ENCODE measurements at regions of chr1 and their contacts with region 1.

Region 1: GRCh38 chr1:101288491-101288944 is 51.7 kb downstream of the S1PR1 start:
- DNase-seq: peak; percentile 81
- H3K4me3 Mint-ChIP-seq: peak overlapping the region; percentile 12
- H3K27ac Mint-ChIP-seq: peak overlapping the region; percentile 63
- H3K4me1 Mint-ChIP-seq: peaks cover 94% of the 10 kb centered on the region
- H3K27me3 Mint-ChIP-seq: no peaks in the 10 kb centered on the region

Region 2: DNA sequence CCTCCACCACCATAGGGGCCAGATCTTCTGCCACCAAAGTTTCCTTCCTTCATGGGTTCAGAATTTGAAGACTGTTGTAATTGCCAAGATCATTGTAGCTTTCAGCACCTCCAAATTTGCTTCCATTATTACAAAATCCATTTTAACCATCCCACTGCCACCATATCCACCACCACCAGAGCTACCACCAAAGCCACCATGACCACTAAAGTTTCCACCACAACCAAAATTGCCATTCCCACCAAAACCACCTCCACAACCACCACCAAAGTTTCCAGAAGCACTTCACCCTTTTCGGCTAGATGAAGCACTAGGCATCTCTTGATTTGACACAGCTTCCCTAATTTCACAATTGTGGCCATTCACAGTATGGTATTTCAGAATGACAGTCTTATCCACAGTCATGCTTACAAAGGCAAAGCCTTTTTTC is 347.4 kb before region 1 on chr1:
- CTCF ChIA-PET with region 1: interaction called, 13 read pairs
- POLR2A ChIA-PET with region 1: no interaction called
- DNase-seq: peak; percentile 7
- H3K4me3 Mint-ChIP-seq: peak overlapping the region; percentile 46
- H3K27ac Mint-ChIP-seq: peak overlapping the region; percentile 88
- H3K4me1 Mint-ChIP-seq: peaks cover 45% of the 10 kb centered on the region
- H3K27me3 Mint-ChIP-seq: no peaks in the 10 kb centered on the region

Region 3: GRCh38 chr1:101167891-101168290 is 120.6 kb before region 1 on chr1:
- CTCF ChIA-PET with region 1: no interaction called
- POLR2A ChIA-PET with region 1: no interaction called
- DNase-seq: no peak
- H3K4me3 Mint-ChIP-seq: no peak overlapping the region
- H3K27ac Mint-ChIP-seq: no peak overlapping the region
- H3K4me1 Mint-ChIP-seq: peaks cover 20% of the 10 kb centered on the region
- H3K27me3 Mint-ChIP-seq: no peaks in the 10 kb centered on the region

Region 4: GRCh38 chr1:101203820-101204540 is 84.5 kb before region 1 on chr1:
- CTCF ChIA-PET with region 1: no interaction called
- POLR2A ChIA-PET with region 1: no interaction called
- DNase-seq: no peak
- H3K4me3 Mint-ChIP-seq: no peak overlapping the region
- H3K27ac Mint-ChIP-seq: no peak overlapping the region
- H3K4me1 Mint-ChIP-seq: peaks cover 25% of the 10 kb centered on the region
- H3K27me3 Mint-ChIP-seq: no peaks in the 10 kb centered on the region

Region 5: GRCh38 chr1:101302831-101303511 is 14.5 kb after region 1 on chr1:
- CTCF ChIA-PET with region 1: interaction called, 11 read pairs
- POLR2A ChIA-PET with region 1: no interaction called
- DNase-seq: no peak
- H3K4me3 Mint-ChIP-seq: no peak overlapping the region
- H3K27ac Mint-ChIP-seq: no peak overlapping the region
- H3K4me1 Mint-ChIP-seq: peaks cover 23% of the 10 kb centered on the region
- H3K27me3 Mint-ChIP-seq: peaks cover 14% of the 10 kb centered on the region

Region 6: DNA sequence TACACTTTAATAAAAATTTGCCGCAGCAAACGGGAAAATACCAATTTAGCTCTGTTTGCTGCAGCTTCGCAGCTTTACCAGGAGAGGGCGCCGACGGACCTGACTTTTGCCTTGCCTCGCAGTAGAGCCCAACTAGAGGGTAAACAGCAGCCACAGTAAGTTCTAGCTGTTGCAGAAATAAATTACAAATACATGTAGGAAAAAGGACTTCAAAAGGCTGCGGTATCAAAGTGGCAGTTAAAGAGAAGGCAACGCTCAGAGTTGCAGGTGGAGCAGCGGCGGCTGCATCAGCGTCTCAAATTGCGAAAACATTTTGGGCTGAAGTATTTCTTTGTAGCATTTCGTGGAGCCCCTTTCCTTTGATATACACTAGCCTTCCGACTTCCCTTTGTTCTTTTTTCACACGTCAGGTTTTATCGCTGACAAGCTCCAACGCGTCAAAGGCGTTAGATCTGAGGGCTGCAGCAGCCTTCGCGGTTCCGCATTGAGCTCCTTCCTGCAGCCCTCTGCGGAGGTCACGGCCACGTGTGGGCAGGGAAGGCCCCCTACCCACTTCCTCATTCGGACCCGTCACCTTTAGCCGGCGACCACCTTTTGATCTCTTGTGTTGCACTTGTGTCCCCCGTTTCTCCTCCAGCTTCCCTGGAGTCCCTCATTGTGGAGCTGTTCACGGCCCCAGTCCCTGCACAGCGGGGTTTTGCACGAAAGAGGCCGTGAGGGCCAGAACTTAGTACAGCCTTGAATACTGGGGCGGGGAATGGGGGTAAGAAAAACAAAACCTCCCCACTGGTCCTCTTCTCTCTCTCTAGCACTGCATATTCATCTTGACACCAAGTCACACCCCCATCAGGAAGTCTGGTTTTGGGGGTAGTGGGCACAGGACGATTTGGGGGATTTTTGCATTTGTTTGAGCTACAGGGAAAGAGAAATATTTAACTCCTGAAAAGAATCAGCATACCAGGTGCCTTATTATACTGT is 21.1 kb after region 1 on chr1:
- CTCF ChIA-PET with region 1: interaction called, 21 read pairs
- POLR2A ChIA-PET with region 1: no interaction called
- DNase-seq: peak; percentile 85
- H3K4me3 Mint-ChIP-seq: peak overlapping the region; percentile 73
- H3K27ac Mint-ChIP-seq: peak overlapping the region; percentile 98
- H3K4me1 Mint-ChIP-seq: peaks cover 75% of the 10 kb centered on the region
- H3K27me3 Mint-ChIP-seq: no peaks in the 10 kb centered on the region

Region 7: DNA sequence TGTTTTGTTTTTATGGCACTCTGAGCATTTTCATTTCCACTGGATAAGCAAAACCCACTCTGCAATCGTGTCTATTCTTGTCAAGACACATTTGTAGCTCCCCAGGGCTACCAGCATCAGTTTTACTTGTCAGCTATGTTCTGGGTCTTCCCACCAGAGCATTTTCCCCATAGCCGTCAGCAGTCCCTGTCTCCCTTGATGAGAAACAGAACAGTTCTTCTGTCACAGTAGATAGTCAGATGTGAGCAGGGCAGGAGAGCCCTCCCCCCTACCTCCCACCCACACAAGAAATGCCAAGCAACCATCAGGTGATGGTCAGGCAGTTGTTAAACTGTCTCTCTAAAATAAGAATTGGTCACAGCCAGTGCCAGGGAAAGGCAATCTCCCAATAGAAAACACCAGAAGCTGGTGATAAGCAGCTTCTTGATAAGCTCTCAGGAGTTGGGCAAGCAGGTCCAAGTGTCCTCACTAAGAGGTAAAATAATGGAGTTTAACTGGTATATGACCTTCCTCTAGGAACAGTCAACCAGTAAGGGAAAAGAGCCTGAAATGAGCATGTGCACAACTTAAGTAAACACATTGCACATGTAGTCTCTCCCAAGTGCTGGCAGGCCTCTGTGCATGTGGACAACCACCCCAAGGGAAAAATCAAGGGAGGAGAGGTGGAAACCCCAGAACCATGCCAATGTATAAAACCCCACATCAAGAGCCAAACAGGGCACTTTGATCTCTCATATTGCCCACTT is 156.5 kb after region 1 on chr1:
- CTCF ChIA-PET with region 1: no interaction called
- POLR2A ChIA-PET with region 1: no interaction called
- DNase-seq: no peak
- H3K4me3 Mint-ChIP-seq: no peak overlapping the region
- H3K27ac Mint-ChIP-seq: no peak overlapping the region
- H3K4me1 Mint-ChIP-seq: no peaks in the 10 kb centered on the region
- H3K27me3 Mint-ChIP-seq: peaks cover 22% of the 10 kb centered on the region

Measured in activated CD4-positive, alpha-beta T cell treated with anti-CD3 and anti-CD28 coated beads, Interleukin-2, amount 10 ng/mL, durations not matched to agents 7 days and 5 days (primary cell).